Endothelial cell of umbilical vein (primary cell): ENCODE measurements at regions of chr6 and their contacts with region 1.

Region 1: GRCh38 chr6:56101141-56101553 is 146.2 kb downstream of the COL21A1 start:
- DNase-seq: no peak
- H3K4me3 ChIP-seq: no peak overlapping the region
- H3K27ac ChIP-seq: no peak overlapping the region
- H3K4me1 ChIP-seq: peaks cover 13% of the 10 kb centered on the region
- H3K27me3 ChIP-seq: no peaks in the 10 kb centered on the region
- CTCF ChIP-seq: no peak
- POLR2A ChIP-seq: no peak

Region 2: GRCh38 chr6:56115715-56116114 is 14.6 kb after region 1 on chr6:
- CTCF ChIA-PET with region 1: no interaction called
- POLR2A ChIA-PET with region 1: no interaction called
- dilution Hi-C with region 1: no loop called
- intact Hi-C with region 1: no loop called
- DNase-seq: no peak
- H3K4me3 ChIP-seq: no peak overlapping the region
- H3K27ac ChIP-seq: no peak overlapping the region
- H3K4me1 ChIP-seq: no peaks in the 10 kb centered on the region
- H3K27me3 ChIP-seq: no peaks in the 10 kb centered on the region
- CTCF ChIP-seq: no peak
- POLR2A ChIP-seq: no peak

Region 3: DNA sequence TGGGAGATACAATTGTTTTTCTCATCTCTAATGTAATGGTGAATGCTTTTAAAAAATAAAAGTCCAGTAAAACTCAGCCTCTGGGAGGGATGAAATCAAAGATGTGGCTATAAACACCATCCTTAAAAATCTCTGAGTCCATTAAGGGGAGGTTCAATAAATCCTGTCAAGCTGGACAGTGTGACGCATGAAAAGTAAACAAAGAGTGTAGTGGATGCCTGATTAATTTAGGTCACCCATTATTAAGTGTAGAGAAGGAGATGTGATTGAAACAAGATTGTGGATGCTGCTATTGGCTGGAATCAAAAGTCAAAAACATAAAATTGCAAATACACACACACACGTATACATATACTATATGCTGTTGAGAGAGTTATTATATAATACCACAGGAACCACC is 30.3 kb after region 1 on chr6:
- CTCF ChIA-PET with region 1: no interaction called
- POLR2A ChIA-PET with region 1: no interaction called
- dilution Hi-C with region 1: no loop called
- intact Hi-C with region 1: no loop called
- DNase-seq: no peak
- H3K4me3 ChIP-seq: no peak overlapping the region
- H3K27ac ChIP-seq: no peak overlapping the region
- H3K4me1 ChIP-seq: no peaks in the 10 kb centered on the region
- H3K27me3 ChIP-seq: no peaks in the 10 kb centered on the region
- CTCF ChIP-seq: no peak
- POLR2A ChIP-seq: no peak

Region 4: GRCh38 chr6:56230976-56231566 is 129.9 kb after region 1 on chr6:
- CTCF ChIA-PET with region 1: no interaction called
- POLR2A ChIA-PET with region 1: no interaction called
- dilution Hi-C with region 1: no loop called
- intact Hi-C with region 1: loop called (anchors 5 kb)
- DNase-seq: peak; percentile 86
- H3K4me3 ChIP-seq: no peak overlapping the region
- H3K27ac ChIP-seq: no peak overlapping the region
- H3K4me1 ChIP-seq: peaks cover 7% of the 10 kb centered on the region
- H3K27me3 ChIP-seq: no peaks in the 10 kb centered on the region
- CTCF ChIP-seq: no peak
- POLR2A ChIP-seq: no peak